ENCODE measurements at regions of chr6 and their contacts with region 1.

Region 1: GRCh38 chr6:130885392-130886192 is 58.4 kb downstream of the SMLR1 start:
- DNase-seq: no peak
- H3K4me3 ChIP-seq: no peak overlapping the region
- CTCF ChIP-seq: peak; percentile 70

Region 2: GRCh38 chr6:130513770-130514169 is 371.8 kb before region 1 on chr6:
- CTCF ChIA-PET with region 1: no interaction called
- POLR2A ChIA-PET with region 1: no interaction called
- DNase-seq: peak; percentile 41
- H3K4me3 ChIP-seq: no peak overlapping the region
- CTCF ChIP-seq: no peak

Region 3: GRCh38 chr6:130632277-130632676 is 253.3 kb before region 1 on chr6:
- CTCF ChIA-PET with region 1: no interaction called
- POLR2A ChIA-PET with region 1: no interaction called
- DNase-seq: no peak
- H3K4me3 ChIP-seq: no peak overlapping the region
- CTCF ChIP-seq: no peak

Region 4: GRCh38 chr6:130900913-130901312 is 15.3 kb after region 1 on chr6:
- CTCF ChIA-PET with region 1: interaction called, 15 read pairs
- POLR2A ChIA-PET with region 1: no interaction called
- DNase-seq: peak; percentile 26
- H3K4me3 ChIP-seq: no peak overlapping the region
- CTCF ChIP-seq: no peak

Region 5: DNA sequence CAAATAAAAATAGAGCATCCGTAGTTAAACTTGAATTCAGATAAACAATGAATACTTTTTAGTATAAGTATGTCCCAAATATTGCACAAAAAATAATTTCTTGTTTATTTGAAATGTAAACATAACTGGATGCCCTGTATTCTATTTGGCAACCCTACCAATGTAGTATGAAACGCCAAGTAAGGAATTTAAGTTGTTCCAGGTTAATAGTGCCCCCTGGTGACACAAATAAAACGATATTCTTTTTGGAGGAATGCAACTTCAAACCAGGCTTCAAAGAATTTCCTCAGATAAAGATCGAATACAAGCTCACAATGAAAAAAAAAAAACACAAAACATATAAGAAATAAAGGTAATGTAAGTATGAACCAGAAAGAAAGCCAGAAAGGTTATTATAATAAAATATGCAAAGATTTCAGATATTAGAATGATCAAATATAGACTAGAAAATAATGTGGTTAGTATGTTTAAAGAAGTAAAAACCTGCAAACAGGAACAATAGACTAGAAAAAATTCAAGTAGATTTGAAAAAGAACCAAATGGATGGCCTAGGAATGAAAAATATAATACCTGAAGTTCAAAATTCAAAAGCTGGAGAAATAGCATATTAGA is 231.3 kb after region 1 on chr6:
- CTCF ChIA-PET with region 1: interaction called, 231 read pairs
- POLR2A ChIA-PET with region 1: interaction called, 4 read pairs
- DNase-seq: no peak
- H3K4me3 ChIP-seq: no peak overlapping the region
- CTCF ChIP-seq: no peak

Region 6: DNA sequence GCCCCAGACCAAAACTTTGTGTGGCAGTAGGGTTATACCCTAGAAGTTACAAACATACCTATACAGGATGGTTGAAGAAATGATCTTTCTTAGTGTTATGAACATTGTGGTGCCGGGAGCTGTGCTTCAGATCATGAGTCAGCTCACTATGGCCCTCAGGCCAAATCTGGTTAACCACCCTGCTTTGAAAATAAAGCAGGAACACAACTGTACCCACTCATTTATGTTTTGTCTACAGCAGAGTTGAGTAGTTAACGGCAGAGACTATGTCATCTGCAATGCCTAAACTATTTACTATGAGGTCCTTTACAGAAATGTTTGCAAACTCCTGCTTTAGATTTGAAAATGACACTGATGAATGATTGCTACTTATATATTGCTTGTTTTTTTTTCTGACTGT is 274.0 kb after region 1 on chr6:
- CTCF ChIA-PET with region 1: interaction called, 17 read pairs
- POLR2A ChIA-PET with region 1: no interaction called
- DNase-seq: peak; percentile 40
- H3K4me3 ChIP-seq: no peak overlapping the region
- CTCF ChIP-seq: no peak

Region 7: GRCh38 chr6:131182991-131183425 is 297.4 kb after region 1 on chr6:
- CTCF ChIA-PET with region 1: interaction called, 12 read pairs
- POLR2A ChIA-PET with region 1: no interaction called
- DNase-seq: no peak
- H3K4me3 ChIP-seq: no peak overlapping the region
- CTCF ChIP-seq: peak; percentile 29

Measured in AG04449 (cell line).